ENCODE measurements at regions of chr2 and their contacts with region 1.

Region 1: DNA sequence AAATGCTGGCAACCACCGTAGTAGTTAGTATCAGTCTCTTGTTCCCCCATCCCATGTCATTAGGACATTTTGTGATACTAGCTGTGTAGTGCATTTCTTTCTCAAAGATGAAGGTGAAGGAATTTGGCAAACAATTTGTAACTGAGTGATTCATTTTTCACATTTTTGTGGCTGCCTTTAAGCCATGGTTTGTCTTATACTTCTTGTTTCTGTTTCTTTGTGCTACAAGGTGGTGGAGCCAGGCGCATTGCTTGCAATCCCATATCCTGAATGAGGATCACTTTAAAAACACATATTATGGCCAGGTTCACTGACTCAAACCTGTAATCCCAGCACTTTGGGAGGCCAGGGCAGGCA is 40.6 kb downstream of the GPD2 start:
- DNase-seq: peak; percentile 33
- ATAC-seq: peak; percentile 41
- H3K4me3 Mint-ChIP-seq: no peak overlapping the region
- H3K27ac Mint-ChIP-seq: peak overlapping the region; percentile 55
- H3K4me1 Mint-ChIP-seq: peaks cover 63% of the 10 kb centered on the region
- H3K27me3 Mint-ChIP-seq: no peaks in the 10 kb centered on the region
- CTCF ChIP-seq: no peak

Region 2: GRCh38 chr2:156380117-156380645 is 96.6 kb before region 1 on chr2:
- CTCF ChIA-PET with region 1: no interaction called
- POLR2A ChIA-PET with region 1: no interaction called
- intact Hi-C with region 1: no loop called
- DNase-seq: peak; percentile 35
- ATAC-seq: peak; percentile 56
- H3K4me3 Mint-ChIP-seq: no peak overlapping the region
- H3K27ac Mint-ChIP-seq: no peak overlapping the region
- H3K4me1 Mint-ChIP-seq: peaks cover 26% of the 10 kb centered on the region
- H3K27me3 Mint-ChIP-seq: no peaks in the 10 kb centered on the region
- CTCF ChIP-seq: no peak

Region 3: GRCh38 chr2:156435715-156436496 is 40.9 kb before region 1 on chr2 and contains the start of gene GPD2:
- CTCF ChIA-PET with region 1: no interaction called
- POLR2A ChIA-PET with region 1: interaction called, 3 read pairs
- intact Hi-C with region 1: loop called (anchors 2 kb)
- DNase-seq: peak; percentile 59
- ATAC-seq: peak; percentile 69
- H3K4me3 Mint-ChIP-seq: peak within 1 kb of the TSS; percentile 85
- H3K27ac Mint-ChIP-seq: peak within 1 kb of the TSS; percentile 94
- H3K4me1 Mint-ChIP-seq: peaks cover 32% of the 10 kb centered on the region
- H3K27me3 Mint-ChIP-seq: no peaks in the 10 kb centered on the region
- CTCF ChIP-seq: no peak
- total RNA-seq, gene GPD2: 33.5 to 40.9 TPM

Region 4: GRCh38 chr2:156580501-156580900 is 103.7 kb after region 1 on chr2:
- CTCF ChIA-PET with region 1: no interaction called
- POLR2A ChIA-PET with region 1: no interaction called
- intact Hi-C with region 1: no loop called
- DNase-seq: no peak
- ATAC-seq: no peak
- H3K4me3 Mint-ChIP-seq: no peak overlapping the region
- H3K27ac Mint-ChIP-seq: no peak overlapping the region
- H3K4me1 Mint-ChIP-seq: peaks cover 14% of the 10 kb centered on the region
- H3K27me3 Mint-ChIP-seq: no peaks in the 10 kb centered on the region
- CTCF ChIP-seq: no peak

Measured in activated CD8-positive, alpha-beta T cell treated with anti-CD3 and anti-CD28 coated beads for 36 hours (primary cell).